ENCODE measurements at regions of chr6 and their contacts with region 1.

Region 1: DNA sequence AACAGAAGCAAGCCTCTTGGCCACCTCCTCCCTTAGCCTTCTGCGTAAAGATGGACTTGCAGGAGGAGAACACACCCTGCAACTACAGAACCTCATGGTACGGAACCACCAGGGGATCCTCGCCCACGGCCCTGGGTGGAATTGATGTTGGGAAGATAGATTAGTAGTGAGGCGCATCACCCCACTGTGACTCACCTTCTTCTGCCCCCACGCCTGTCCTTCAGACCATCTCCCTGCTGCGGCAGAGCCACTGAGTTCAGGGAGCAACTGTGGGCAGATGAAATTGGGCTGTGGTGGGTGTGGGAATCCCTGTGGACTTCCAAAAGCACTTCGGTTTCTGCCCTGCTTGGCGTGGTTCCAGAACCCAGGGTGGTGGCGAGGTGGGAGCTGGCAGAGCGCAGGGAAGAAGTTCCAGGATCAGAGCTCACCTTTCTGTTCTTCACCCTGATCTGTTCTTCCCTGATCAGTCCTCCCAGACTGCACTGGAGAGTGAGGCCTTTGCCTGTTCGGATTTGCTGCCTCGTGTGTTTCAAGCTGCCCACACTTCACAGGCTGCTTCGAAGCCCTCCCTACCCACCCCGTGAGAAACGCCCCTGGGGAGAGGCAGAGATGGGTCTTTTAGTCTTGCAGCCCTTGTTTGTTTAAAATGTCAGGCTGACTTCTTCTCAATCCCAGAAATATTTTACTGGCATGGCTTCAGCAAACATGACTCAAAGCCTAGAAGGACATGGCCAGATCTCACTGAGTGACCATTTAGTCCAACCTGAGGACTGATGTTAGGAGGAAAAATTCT is 92.8 kb upstream of the MLN start:
- DNase-seq: no peak
- ATAC-seq: no peak
- H3K4me3 ChIP-seq: no peak overlapping the region
- H3K4me3 Mint-ChIP-seq: no peak overlapping the region
- H3K27ac ChIP-seq: no peak overlapping the region
- H3K27ac Mint-ChIP-seq: no peak overlapping the region
- H3K4me1 ChIP-seq: peaks cover 37% of the 10 kb centered on the region
- H3K4me1 Mint-ChIP-seq: peaks cover 50% of the 10 kb centered on the region
- H3K27me3 ChIP-seq: no peaks in the 10 kb centered on the region
- H3K27me3 Mint-ChIP-seq: no peaks in the 10 kb centered on the region
- CTCF ChIP-seq: no peak

Region 2: GRCh38 chr6:33347821-33348220 is 548.8 kb before region 1 on chr6:
- CTCF ChIA-PET with region 1: no interaction called
- POLR2A ChIA-PET with region 1: no interaction called
- intact Hi-C with region 1: no loop called
- DNase-seq: no peak
- ATAC-seq: no peak
- H3K4me3 ChIP-seq: no peak overlapping the region
- H3K4me3 Mint-ChIP-seq: no peak overlapping the region
- H3K27ac ChIP-seq: no peak overlapping the region
- H3K27ac Mint-ChIP-seq: no peak overlapping the region
- H3K4me1 ChIP-seq: peaks cover 25% of the 10 kb centered on the region
- H3K4me1 Mint-ChIP-seq: peaks cover 35% of the 10 kb centered on the region
- H3K27me3 ChIP-seq: no peaks in the 10 kb centered on the region
- H3K27me3 Mint-ChIP-seq: no peaks in the 10 kb centered on the region
- CTCF ChIP-seq: no peak

Region 3: DNA sequence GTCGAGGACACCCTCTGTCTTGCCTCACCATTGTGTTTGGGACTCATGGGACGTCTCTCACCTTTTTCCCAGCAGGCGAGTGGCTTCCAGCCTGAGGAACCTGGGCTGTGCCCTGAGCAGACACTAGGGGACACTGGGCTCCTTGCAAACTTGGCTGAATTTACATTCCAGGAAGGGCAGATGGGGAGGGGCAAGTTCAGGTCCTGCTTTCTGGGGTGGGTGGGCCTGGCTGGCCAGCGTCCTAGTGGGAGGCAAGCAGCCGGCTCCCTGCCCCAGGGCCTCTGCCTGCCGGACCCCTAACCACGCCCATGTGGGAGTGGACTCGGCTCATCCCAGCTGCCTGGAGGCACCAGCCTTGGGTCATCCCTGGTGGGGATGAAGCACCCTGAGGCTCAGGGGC is 44.6 kb before region 1 on chr6:
- CTCF ChIA-PET with region 1: no interaction called
- POLR2A ChIA-PET with region 1: no interaction called
- intact Hi-C with region 1: loop called in 1 of 2 experiments (anchors 2 kb)
- DNase-seq: peak in 4 of 9 experiments; percentile 26 to 58 (median 41)
- ATAC-seq: no peak
- H3K4me3 ChIP-seq: no peak overlapping the region
- H3K4me3 Mint-ChIP-seq: no peak overlapping the region
- H3K27ac ChIP-seq: no peak overlapping the region
- H3K27ac Mint-ChIP-seq: no peak overlapping the region
- H3K4me1 ChIP-seq: peaks cover 24% of the 10 kb centered on the region
- H3K4me1 Mint-ChIP-seq: peaks cover 20% of the 10 kb centered on the region
- H3K27me3 ChIP-seq: peaks cover 0 to 17% of the 10 kb centered on the region in 2 experiments
- H3K27me3 Mint-ChIP-seq: peaks cover 17% of the 10 kb centered on the region
- CTCF ChIP-seq: no peak